Aorta (tissue), 5 donors: ENCODE measurements at regions of chr7 and their contacts with region 1.

Region 1: DNA sequence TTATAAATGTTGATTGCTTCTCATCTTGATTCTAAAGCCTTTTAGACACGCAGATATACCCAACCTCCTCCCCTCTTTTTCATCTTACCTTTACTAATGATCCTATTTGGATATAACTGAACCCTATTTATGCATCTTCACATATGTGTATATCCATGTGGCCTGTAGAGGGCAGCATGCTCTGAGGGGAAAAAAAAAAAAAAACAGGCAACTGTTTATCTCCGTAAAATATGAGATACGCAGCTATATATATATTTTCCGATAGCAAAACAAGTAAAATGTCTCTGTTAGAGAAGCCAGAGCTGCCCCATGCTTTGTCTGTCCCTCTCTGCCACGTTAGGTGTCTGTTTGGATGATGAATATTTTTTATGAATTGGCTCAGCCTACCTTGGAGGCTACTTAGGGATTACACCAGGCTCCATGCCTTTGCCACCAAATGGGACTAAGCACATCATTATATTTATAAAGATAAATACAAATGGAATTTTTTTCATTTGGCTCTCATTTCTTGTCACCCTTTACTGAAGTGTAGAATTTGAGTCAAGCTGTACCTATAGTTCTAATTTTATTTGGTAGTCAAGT is 174.8 kb upstream of the FZD1 start:
- DNase-seq: no peak
- ATAC-seq: peak; percentile 74
- H3K4me3 ChIP-seq: peak overlapping the region; percentile 41 to 69
- H3K27ac ChIP-seq: no peak overlapping the region
- H3K4me1 ChIP-seq: no peaks in the 10 kb centered on the region
- H3K27me3 ChIP-seq: no peaks in the 10 kb centered on the region

Region 2: GRCh38 chr7:91046322-91047089 is 43.0 kb before region 1 on chr7:
- intact Hi-C with region 1: no loop called
- DNase-seq: no peak
- ATAC-seq: peak; percentile 53
- H3K4me3 ChIP-seq: no peak overlapping the region
- H3K27ac ChIP-seq: no peak overlapping the region
- H3K4me1 ChIP-seq: peaks cover 3% of the 10 kb centered on the region in 2 donors
- H3K27me3 ChIP-seq: no peaks in the 10 kb centered on the region

Region 3: GRCh38 chr7:91636129-91636724 is 546.8 kb after region 1 on chr7:
- intact Hi-C with region 1: loop called (anchors 5 kb)
- DNase-seq: no peak
- ATAC-seq: no peak
- H3K4me3 ChIP-seq: no peak overlapping the region
- H3K27ac ChIP-seq: no peak overlapping the region
- H3K4me1 ChIP-seq: no peaks in the 10 kb centered on the region
- H3K27me3 ChIP-seq: no peaks in the 10 kb centered on the region

Region 4: GRCh38 chr7:91784463-91784862 is 695.0 kb after region 1 on chr7:
- intact Hi-C with region 1: loop called (anchors 10 kb)
- DNase-seq: no peak
- ATAC-seq: no peak
- H3K4me3 ChIP-seq: no peak overlapping the region
- H3K27ac ChIP-seq: no peak overlapping the region
- H3K4me1 ChIP-seq: no peaks in the 10 kb centered on the region
- H3K27me3 ChIP-seq: no peaks in the 10 kb centered on the region